Mammary epithelial cell (primary cell): ENCODE measurements at regions of chr2 and their contacts with region 1.

Region 1: DNA sequence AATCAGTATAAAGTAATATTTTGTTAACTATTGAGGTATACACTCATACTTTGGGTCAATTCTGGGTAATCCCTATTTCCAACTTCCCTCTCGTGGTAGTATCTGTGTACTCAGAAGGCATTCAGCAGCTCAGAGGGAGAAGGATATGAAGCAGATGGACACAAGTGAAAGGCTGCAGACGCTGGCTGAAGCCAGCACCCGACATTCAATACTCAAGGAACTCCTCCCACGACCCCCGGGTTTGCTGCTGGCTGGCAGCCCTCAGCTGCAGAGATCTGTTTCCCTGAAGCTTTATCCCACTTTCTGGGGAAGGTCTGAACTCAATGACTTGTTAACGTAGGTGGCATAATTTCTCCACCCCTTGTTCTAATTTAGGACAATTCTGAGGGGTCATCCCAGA is 847.3 kb upstream of the SOX11 start:
- DNase-seq: no peak
- H3K4me3 ChIP-seq: no peak overlapping the region
- H3K27ac ChIP-seq: no peak overlapping the region
- H3K4me1 ChIP-seq: no peaks in the 10 kb centered on the region
- H3K27me3 ChIP-seq: no peaks in the 10 kb centered on the region
- CTCF ChIP-seq: no peak

Region 2: GRCh38 chr2:4831751-4832150 is 13.1 kb before region 1 on chr2:
- CTCF ChIA-PET with region 1: no interaction called
- dilution Hi-C with region 1: no loop called
- in situ Hi-C with region 1: no loop called
- intact Hi-C with region 1: loop called (anchors 1 kb)
- DNase-seq: no peak
- H3K4me3 ChIP-seq: no peak overlapping the region
- H3K27ac ChIP-seq: no peak overlapping the region
- H3K4me1 ChIP-seq: no peaks in the 10 kb centered on the region
- H3K27me3 ChIP-seq: no peaks in the 10 kb centered on the region
- CTCF ChIP-seq: no peak

Region 3: DNA sequence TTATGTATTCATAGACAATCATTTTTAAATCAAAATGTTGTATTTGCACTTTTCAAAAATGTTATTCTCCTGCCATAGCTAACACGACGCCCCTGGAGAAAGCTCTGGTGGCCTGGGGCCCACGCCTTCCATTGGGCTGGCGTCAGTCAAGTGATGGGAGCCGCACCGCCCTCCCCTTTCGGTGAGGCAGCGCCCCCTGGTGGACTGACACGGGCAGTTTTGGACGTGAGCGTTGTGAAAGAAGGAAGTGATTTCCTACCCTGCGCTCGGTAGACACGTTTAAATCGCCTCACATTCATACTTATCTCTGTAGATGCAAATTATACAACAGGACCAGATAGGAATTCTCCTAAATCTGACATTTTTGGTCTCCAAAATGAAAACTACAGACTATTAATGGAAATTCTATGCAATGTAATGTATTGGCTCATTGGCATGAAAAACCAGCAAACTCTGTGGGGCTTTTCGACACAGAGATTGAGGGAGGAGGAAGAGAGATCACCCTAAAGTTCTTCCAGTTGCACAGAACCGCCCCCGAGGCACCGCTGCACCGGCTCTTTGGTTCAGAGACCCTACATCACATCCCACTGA is 521.1 kb after region 1 on chr2:
- CTCF ChIA-PET with region 1: no interaction called
- dilution Hi-C with region 1: no loop called
- in situ Hi-C with region 1: no loop called
- intact Hi-C with region 1: loop called (anchors 10 kb)
- DNase-seq: peak; percentile 6
- H3K4me3 ChIP-seq: no peak overlapping the region
- H3K27ac ChIP-seq: no peak overlapping the region
- H3K4me1 ChIP-seq: no peaks in the 10 kb centered on the region
- H3K27me3 ChIP-seq: no peaks in the 10 kb centered on the region
- CTCF ChIP-seq: peak; percentile 36 to 69